K562 (cell line): ENCODE measurements at regions of chr1 and their contacts with region 1.

Region 1: GRCh38 chr1:9867408-9868243 is 42.4 kb downstream of the CTNNBIP1 start:
- DNase-seq: peak; percentile 84 to 92 (median 89)
- ATAC-seq: peak; percentile 99
- H3K4me3 ChIP-seq: no peak overlapping the region
- H3K27ac ChIP-seq: no peak overlapping the region
- H3K4me1 ChIP-seq: peaks cover 0 to 24% of the 10 kb centered on the region in 2 experiments; a peak in 2 of 5 replicates
- H3K27me3 ChIP-seq: no peaks in the 10 kb centered on the region
- CTCF ChIP-seq: peak; percentile 97 to 98 (median 98)
- EP300 ChIP-seq: no peak
- POLR2A ChIP-seq: no peak
- RAD21 ChIP-seq: peak; percentile 96 to 99

Region 2: GRCh38 chr1:9529190-9529589 is 338.4 kb before region 1 on chr1:
- CTCF ChIA-PET with region 1: no interaction called
- POLR2A ChIA-PET with region 1: no interaction called
- in situ Hi-C with region 1: no loop called
- intact Hi-C with region 1: no loop called
- DNase-seq: peak in 3 of 4 experiments; percentile 31 to 69 (median 64)
- ATAC-seq: peak; percentile 97
- H3K4me3 ChIP-seq: no peak overlapping the region
- H3K27ac ChIP-seq: no peak overlapping the region; the same call in 2 of the 3 replicates
- H3K4me1 ChIP-seq: peaks cover 0 to 8% of the 10 kb centered on the region in 2 experiments; a peak in 3 of 5 replicates
- H3K27me3 ChIP-seq: no peaks in the 10 kb centered on the region; a peak in 2 of 5 replicates
- CTCF ChIP-seq: no peak
- EP300 ChIP-seq: no peak
- POLR2A ChIP-seq: no peak
- RAD21 ChIP-seq: no peak

Region 3: GRCh38 chr1:9724706-9725476 is 142.7 kb before region 1 on chr1:
- CTCF ChIA-PET with region 1: interaction called, 3 read pairs
- POLR2A ChIA-PET with region 1: no interaction called
- in situ Hi-C with region 1: no loop called
- intact Hi-C with region 1: loop called (anchors 5 kb)
- DNase-seq: peak; percentile 86 to 91 (median 88)
- ATAC-seq: peak; percentile 96
- H3K4me3 ChIP-seq: no peak overlapping the region
- H3K27ac ChIP-seq: no peak overlapping the region
- H3K4me1 ChIP-seq: peaks cover 7 to 43% of the 10 kb centered on the region in 2 experiments
- H3K27me3 ChIP-seq: no peaks in the 10 kb centered on the region
- CTCF ChIP-seq: peak; percentile 97 to 99 (median 99)
- EP300 ChIP-seq: no peak
- POLR2A ChIP-seq: no peak
- RAD21 ChIP-seq: peak; percentile 62 to 96

Region 4: GRCh38 chr1:9784508-9785133 is 83.0 kb before region 1 on chr1:
- CTCF ChIA-PET with region 1: interaction called, 86 read pairs
- POLR2A ChIA-PET with region 1: interaction called, 3 read pairs
- in situ Hi-C with region 1: loop called (anchors 5 kb)
- intact Hi-C with region 1: loop called (anchors 1 kb)
- DNase-seq: peak; percentile 64 to 79 (median 65)
- ATAC-seq: peak; percentile 78
- H3K4me3 ChIP-seq: no peak overlapping the region
- H3K27ac ChIP-seq: no peak overlapping the region
- H3K4me1 ChIP-seq: no peaks in the 10 kb centered on the region
- H3K27me3 ChIP-seq: no peaks in the 10 kb centered on the region
- CTCF ChIP-seq: peak; percentile 82 to 97 (median 88)
- EP300 ChIP-seq: no peak
- POLR2A ChIP-seq: no peak
- RAD21 ChIP-seq: peak; percentile 96

Region 5: GRCh38 chr1:10236405-10237156 is 369.0 kb after region 1 on chr1:
- CTCF ChIA-PET with region 1: no interaction called
- POLR2A ChIA-PET with region 1: no interaction called
- in situ Hi-C with region 1: no loop called
- intact Hi-C with region 1: no loop called
- DNase-seq: no peak
- ATAC-seq: no peak
- H3K4me3 ChIP-seq: no peak overlapping the region
- H3K27ac ChIP-seq: no peak overlapping the region
- H3K4me1 ChIP-seq: no peaks in the 10 kb centered on the region
- H3K27me3 ChIP-seq: no peaks in the 10 kb centered on the region
- CTCF ChIP-seq: no peak
- EP300 ChIP-seq: no peak
- POLR2A ChIP-seq: no peak
- RAD21 ChIP-seq: no peak